Sigmoid colon (tissue), 7 donors: ENCODE measurements at regions of chr13 and their contacts with region 1.

Region 1: DNA sequence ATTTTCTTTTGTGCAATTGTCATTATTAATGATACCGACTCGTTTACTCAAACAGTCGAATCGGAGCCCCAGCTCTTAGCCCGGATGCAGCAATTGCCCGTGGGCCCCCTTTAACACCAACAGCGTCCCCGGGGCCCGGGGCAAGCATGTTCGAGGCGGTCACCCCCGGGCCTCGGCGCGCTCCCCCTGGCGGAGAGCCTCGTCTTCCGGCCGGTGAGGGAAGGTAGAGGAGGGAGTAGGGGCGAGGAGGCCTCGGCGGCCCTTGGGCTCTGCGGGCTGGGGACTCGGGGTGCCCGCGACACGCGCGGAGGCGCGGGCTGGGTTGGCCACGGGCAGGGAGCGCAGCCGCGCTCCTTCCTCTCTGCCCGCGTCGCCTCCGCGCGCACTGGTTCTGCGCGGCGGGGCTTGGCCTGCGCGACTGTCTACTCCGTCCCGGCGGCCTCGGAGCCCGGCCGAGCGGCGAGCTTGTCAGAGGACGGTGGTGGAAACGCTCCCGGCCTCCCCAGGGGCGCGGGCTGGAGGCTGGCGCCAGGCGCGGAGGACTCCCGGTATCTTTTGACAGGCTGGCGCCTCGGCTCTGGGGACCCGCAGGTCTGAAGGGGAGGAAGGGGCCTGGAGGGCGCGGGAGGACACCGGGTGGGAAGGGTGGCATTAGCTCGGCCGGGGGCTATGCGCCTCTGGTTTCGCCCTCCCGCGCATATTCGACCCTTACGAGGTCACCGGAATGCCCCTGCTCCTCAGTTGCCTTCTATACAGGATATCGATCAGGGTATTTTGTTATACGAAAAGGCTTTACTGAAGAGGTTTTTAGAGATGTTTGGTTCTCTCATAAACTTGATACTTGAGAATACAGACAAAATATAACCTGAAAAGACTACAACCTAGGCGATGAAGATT is 1.5 kb downstream of the BIVM start:
- DNase-seq: peak; percentile 89
- H3K4me3 ChIP-seq: peak overlapping the region; percentile 75 to 91 (median 86)
- H3K27ac ChIP-seq: peak overlapping the region; percentile 84 to 90 (median 84)
- H3K4me1 ChIP-seq: peaks cover 0 to 33% (median 23%) of the 10 kb centered on the region in 4 donors
- H3K27me3 ChIP-seq: no peaks in the 10 kb centered on the region
- CTCF ChIP-seq: peak; percentile 49 to 68 (median 58)
- EP300 ChIP-seq: no peak
- POLR2A ChIP-seq: no peak

Region 2: GRCh38 chr13:102596147-102597028 is 204.0 kb before region 1 on chr13 and contains the start of gene TPP2:
- intact Hi-C with region 1: loop called (anchors 2 kb)
- DNase-seq: peak; percentile 100
- H3K4me3 ChIP-seq: peak within 1 kb of the TSS; percentile 73 to 99 (median 96)
- H3K27ac ChIP-seq: peak within 1 kb of the TSS; percentile 94 to 99 (median 96)
- H3K4me1 ChIP-seq: peaks cover 0 to 58% (median 37%) of the 10 kb centered on the region in 4 donors
- H3K27me3 ChIP-seq: no peaks in the 10 kb centered on the region
- CTCF ChIP-seq: no peak
- EP300 ChIP-seq: no peak
- POLR2A ChIP-seq: peak; percentile 56 to 70
- total RNA-seq, gene TPP2: 33.0 to 54.2 (median 37.3) TPM

Region 3: GRCh38 chr13:102657630-102658029 is 142.8 kb before region 1 on chr13:
- intact Hi-C with region 1: loop called (anchors 10 kb)
- DNase-seq: no peak
- H3K4me3 ChIP-seq: no peak overlapping the region
- H3K27ac ChIP-seq: no peak overlapping the region
- H3K4me1 ChIP-seq: peaks cover 0 to 3% (median 2%) of the 10 kb centered on the region in 4 donors
- H3K27me3 ChIP-seq: no peaks in the 10 kb centered on the region
- CTCF ChIP-seq: no peak
- EP300 ChIP-seq: no peak
- POLR2A ChIP-seq: no peak

Region 4: GRCh38 chr13:102773441-102774215 is 26.8 kb before region 1 on chr13 and contains the start of gene TEX30:
- intact Hi-C with region 1: loop called (anchors 1 kb)
- DNase-seq: peak; percentile 89
- H3K4me3 ChIP-seq: peak within 1 kb of the TSS; percentile 66 to 91 (median 80)
- H3K27ac ChIP-seq: peak within 1 kb of the TSS; percentile 82 to 90 (median 90)
- H3K4me1 ChIP-seq: peaks cover 0 to 18% (median 11%) of the 10 kb centered on the region in 4 donors
- H3K27me3 ChIP-seq: no peaks in the 10 kb centered on the region
- CTCF ChIP-seq: no peak
- EP300 ChIP-seq: no peak
- POLR2A ChIP-seq: peak; percentile 44 to 46
- total RNA-seq, gene TEX30: 8.9 to 17.3 (median 11.7) TPM